GM10248 (cell line): ENCODE measurements at regions of chr2 and their contacts with region 1.

Region 1: GRCh38 chr2:178414266-178415247 is 36.4 kb downstream of the PRKRA start:
- DNase-seq: peak; percentile 79
- CTCF ChIP-seq: peak; percentile 87

Region 2: DNA sequence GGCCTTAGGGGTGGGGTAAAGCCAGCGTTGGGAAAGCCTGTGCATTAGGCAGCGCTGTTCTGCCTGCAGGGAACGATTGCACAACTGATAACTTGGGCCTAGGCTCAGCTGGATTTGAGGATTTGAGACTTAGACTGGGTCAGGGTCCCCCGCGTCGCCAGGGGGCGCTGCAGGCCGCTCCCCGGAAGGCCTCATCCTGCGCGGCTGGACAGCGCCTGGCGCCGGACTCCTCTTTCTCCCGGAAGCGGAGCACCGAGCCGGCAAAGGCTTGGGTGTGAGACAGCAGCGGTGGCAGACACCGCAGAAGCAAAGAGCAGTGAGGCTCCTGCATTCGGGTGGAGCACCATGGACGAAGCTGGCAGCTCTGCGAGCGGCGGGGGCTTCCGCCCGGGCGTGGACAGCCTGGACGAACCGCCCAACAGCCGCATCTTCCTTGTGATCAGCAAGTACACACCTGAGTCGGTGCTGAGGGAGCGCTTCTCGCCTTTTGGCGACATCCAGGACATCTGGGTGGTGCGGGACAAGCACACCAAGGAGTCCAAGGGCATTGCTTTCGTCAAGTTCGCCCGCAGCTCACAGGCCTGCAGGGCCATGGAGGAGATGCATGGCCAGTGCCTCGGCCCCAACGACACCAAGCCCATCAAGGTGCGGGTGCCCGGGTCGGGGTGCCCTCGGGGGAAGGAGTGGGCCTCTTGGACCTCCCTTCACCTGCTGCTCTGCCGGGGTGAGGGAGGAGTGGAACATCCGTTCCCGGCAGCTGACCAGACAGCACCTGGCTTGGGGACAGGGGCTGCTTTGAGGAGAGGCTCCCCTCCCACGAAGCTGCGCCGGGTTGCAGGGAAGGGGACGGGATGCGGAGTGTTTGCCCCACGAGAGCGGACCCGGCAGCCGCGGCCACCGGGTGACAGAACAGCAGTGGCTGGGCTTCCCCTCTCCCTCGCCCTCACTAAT is 302.1 kb before region 1 on chr2 and contains the start of gene RBM45:
- CTCF ChIA-PET with region 1: interaction called, 110 read pairs
- POLR2A ChIA-PET with region 1: no interaction called
- DNase-seq: peak; percentile 91
- CTCF ChIP-seq: peak; percentile 91

Region 3: GRCh38 chr2:178397002-178397605 is 17.5 kb before region 1 on chr2:
- CTCF ChIA-PET with region 1: interaction called, 170 read pairs
- POLR2A ChIA-PET with region 1: no interaction called
- DNase-seq: peak; percentile 40
- CTCF ChIP-seq: peak; percentile 67

Region 4: DNA sequence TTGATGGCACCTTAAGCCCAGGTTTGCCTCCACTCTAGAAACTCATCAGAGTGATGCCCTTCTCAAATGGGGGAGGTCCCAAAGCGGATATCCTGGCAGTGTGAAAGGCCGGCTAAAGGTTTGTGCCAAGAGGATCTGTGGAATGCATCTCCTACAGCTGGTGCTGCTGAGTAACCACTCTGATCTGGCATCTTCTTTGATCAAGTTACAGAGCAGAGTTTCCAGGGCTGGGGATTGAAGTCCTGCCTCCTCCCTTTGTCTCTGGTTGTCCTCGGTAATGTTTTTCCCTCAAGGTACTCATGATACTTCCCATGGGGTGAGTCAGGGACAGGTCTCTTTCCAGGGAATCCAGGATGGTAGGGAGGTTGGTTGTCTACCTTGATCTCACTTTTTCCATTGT is 11.8 kb after region 1 on chr2:
- CTCF ChIA-PET with region 1: interaction called, 76 read pairs
- POLR2A ChIA-PET with region 1: no interaction called
- DNase-seq: no peak
- CTCF ChIP-seq: no peak

Region 5: DNA sequence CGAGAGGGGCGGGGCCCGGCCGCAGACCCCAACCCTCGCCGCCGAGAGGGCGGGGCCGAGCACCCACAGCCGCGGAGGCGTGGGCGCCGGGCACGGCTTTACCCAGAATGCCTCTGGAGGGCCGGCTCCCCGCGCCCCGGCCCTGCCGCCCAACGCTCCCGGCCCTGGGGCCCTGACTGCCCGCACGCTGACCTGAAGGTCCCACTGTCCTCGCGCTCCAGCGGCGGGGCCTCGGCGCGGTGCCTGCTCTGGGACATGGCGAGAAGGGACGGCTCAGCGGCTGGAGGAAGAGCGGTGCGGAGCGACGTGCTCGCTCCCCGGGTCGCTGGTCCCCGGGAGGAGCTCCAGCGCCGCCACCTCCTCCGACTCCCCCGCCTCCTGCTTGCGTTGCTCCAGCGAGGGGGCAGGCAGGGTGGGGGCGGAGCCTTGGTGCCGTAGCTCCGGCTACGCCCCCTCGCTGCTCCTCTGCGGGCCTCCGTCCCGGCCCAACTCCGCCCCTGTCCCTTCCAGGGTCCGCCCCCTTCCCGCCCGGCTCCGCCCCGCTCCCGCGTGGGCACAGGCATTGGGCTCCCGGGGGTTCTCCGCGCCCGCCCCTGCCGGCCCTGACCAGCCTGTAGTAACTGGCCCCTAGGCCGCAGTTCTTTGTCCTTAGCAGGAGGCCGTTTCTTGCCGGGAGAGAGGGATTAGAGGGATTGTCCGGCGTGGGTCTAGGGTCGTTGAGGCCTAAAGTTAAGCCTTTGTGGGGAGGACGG is 36.4 kb after region 1 on chr2 and contains the starts of genes PJVK and PRKRA:
- CTCF ChIA-PET with region 1: interaction called, 18 read pairs
- POLR2A ChIA-PET with region 1: interaction called, 4 read pairs
- DNase-seq: peak; percentile 98
- CTCF ChIP-seq: no peak

Region 6: GRCh38 chr2:178679891-178680290 is 265.3 kb after region 1 on chr2:
- CTCF ChIA-PET with region 1: no interaction called
- POLR2A ChIA-PET with region 1: no interaction called
- DNase-seq: no peak
- CTCF ChIP-seq: no peak